Endothelial cell of umbilical vein (primary cell): ENCODE measurements at regions of chr20 and their contacts with region 1.

Region 1: DNA sequence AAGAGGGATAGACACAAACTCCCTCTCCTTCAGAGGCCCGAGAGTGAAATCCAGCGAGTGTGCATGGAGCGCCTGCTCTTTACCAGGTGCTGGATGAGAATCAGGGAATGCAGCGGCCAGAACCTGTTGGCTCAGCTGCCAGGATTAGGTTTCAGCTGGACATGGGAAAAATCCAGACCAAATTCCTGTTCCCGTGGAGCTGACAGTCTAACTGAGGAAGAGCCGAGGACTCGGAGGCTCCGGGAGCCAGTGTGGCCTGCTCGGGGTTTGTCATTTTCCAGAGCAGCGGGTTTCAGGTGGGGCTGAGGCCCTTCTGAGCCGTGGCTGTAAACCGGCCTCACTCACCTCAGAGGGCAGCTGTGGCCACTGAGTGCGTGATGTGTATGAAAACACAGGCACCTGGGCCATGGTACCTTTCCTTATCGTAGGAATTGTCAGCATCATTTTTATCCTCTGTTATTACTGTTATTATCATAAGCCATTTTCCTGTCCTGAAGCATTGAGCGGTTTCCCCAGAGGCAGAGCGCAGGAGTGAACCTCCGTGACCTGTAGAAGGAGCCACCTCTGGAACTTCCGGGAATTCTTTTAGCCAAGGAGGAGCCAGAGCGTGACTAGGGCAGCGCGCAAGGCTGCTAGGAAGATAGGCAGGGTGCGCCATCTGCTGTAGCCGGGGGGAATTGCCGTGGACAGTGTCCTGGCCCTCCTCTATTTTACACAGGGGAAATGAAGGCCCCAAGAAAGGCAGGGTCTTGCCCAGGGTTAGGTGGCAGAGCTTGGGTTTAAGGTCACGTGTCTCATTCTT is 27.3 kb downstream of the PKIG start:
- DNase-seq: peak; percentile 91
- H3K4me3 ChIP-seq: no peak overlapping the region
- H3K27ac ChIP-seq: peak overlapping the region; percentile 53
- H3K4me1 ChIP-seq: peaks cover 16% of the 10 kb centered on the region
- H3K27me3 ChIP-seq: no peaks in the 10 kb centered on the region
- CTCF ChIP-seq: peak; percentile 97 to 98
- POLR2A ChIP-seq: no peak

Region 2: GRCh38 chr20:44217342-44218092 is 392.2 kb before region 1 on chr20:
- CTCF ChIA-PET with region 1: interaction called, 8 read pairs
- POLR2A ChIA-PET with region 1: no interaction called
- dilution Hi-C with region 1: no loop called
- intact Hi-C with region 1: loop called (anchors 1 kb)
- DNase-seq: peak; percentile 55
- H3K4me3 ChIP-seq: no peak overlapping the region
- H3K27ac ChIP-seq: no peak overlapping the region
- H3K4me1 ChIP-seq: no peaks in the 10 kb centered on the region
- H3K27me3 ChIP-seq: no peaks in the 10 kb centered on the region
- CTCF ChIP-seq: peak; percentile 80 to 91
- POLR2A ChIP-seq: no peak

Region 3: GRCh38 chr20:44521484-44522481 is 87.9 kb before region 1 on chr20 and contains the start of gene SERINC3:
- CTCF ChIA-PET with region 1: interaction called, 17 read pairs
- POLR2A ChIA-PET with region 1: no interaction called
- dilution Hi-C with region 1: no loop called
- intact Hi-C with region 1: loop called (anchors 1 kb)
- DNase-seq: peak; percentile 96
- H3K4me3 ChIP-seq: peak within 1 kb of the TSS; percentile 25 to 86 (median 78)
- H3K27ac ChIP-seq: peak within 1 kb of the TSS; percentile 90
- H3K4me1 ChIP-seq: peaks cover 33% of the 10 kb centered on the region
- H3K27me3 ChIP-seq: no peaks in the 10 kb centered on the region
- CTCF ChIP-seq: peak in 1 of 2 donors; percentile 0
- POLR2A ChIP-seq: peak; percentile 82
- total RNA-seq, gene SERINC3: 83.7 TPM in 2 replicates

Region 4: DNA sequence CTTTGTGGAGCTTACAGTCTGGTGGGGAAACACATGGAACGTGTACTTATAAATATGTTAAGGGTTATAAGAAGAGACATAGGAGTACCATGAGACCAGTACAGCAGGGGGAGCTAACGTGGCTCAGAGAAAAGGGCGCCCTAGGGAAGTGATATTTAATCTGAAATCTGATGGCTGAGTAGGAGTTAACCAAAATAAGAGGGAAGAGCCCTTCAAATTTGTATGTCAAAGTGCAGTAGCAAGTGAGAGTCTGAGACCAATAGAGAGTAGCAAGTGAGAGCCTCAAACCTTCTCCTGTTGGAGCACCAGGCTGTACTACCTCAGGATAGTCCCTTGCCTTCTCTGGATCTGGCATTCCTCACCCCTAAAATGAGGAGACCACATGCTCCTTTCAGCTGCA is 33.4 kb before region 1 on chr20:
- CTCF ChIA-PET with region 1: interaction called, 58 read pairs
- POLR2A ChIA-PET with region 1: interaction called, 3 read pairs
- dilution Hi-C with region 1: no loop called
- intact Hi-C with region 1: loop called (anchors 1 kb)
- DNase-seq: peak; percentile 76
- H3K4me3 ChIP-seq: no peak overlapping the region
- H3K27ac ChIP-seq: peak overlapping the region; percentile 61
- H3K4me1 ChIP-seq: peaks cover 53% of the 10 kb centered on the region
- H3K27me3 ChIP-seq: no peaks in the 10 kb centered on the region
- CTCF ChIP-seq: peak; percentile 35 to 51
- POLR2A ChIP-seq: no peak

Region 5: GRCh38 chr20:44598423-44599305 is 11.0 kb before region 1 on chr20:
- CTCF ChIA-PET with region 1: interaction called, 18 read pairs
- POLR2A ChIA-PET with region 1: no interaction called
- dilution Hi-C with region 1: no loop called
- intact Hi-C with region 1: no loop called
- DNase-seq: peak; percentile 71
- H3K4me3 ChIP-seq: no peak overlapping the region
- H3K27ac ChIP-seq: peak overlapping the region; percentile 81
- H3K4me1 ChIP-seq: peaks cover 79% of the 10 kb centered on the region
- H3K27me3 ChIP-seq: no peaks in the 10 kb centered on the region
- CTCF ChIP-seq: peak; percentile 13 to 24
- POLR2A ChIP-seq: no peak

Region 6: GRCh38 chr20:44733341-44734069 is 123.8 kb after region 1 on chr20:
- CTCF ChIA-PET with region 1: interaction called, 3 read pairs
- POLR2A ChIA-PET with region 1: no interaction called
- dilution Hi-C with region 1: no loop called
- intact Hi-C with region 1: loop called (anchors 1 kb)
- DNase-seq: peak; percentile 74
- H3K4me3 ChIP-seq: no peak overlapping the region
- H3K27ac ChIP-seq: no peak overlapping the region
- H3K4me1 ChIP-seq: peaks cover 12% of the 10 kb centered on the region
- H3K27me3 ChIP-seq: no peaks in the 10 kb centered on the region
- CTCF ChIP-seq: peak; percentile 84 to 92
- POLR2A ChIP-seq: no peak